Activated CD8-positive, alpha-beta T cell treated with anti-CD3 and anti-CD28 coated beads for 36 hours (primary cell): ENCODE measurements at regions of chr1 and their contacts with region 1.

Region 1: DNA sequence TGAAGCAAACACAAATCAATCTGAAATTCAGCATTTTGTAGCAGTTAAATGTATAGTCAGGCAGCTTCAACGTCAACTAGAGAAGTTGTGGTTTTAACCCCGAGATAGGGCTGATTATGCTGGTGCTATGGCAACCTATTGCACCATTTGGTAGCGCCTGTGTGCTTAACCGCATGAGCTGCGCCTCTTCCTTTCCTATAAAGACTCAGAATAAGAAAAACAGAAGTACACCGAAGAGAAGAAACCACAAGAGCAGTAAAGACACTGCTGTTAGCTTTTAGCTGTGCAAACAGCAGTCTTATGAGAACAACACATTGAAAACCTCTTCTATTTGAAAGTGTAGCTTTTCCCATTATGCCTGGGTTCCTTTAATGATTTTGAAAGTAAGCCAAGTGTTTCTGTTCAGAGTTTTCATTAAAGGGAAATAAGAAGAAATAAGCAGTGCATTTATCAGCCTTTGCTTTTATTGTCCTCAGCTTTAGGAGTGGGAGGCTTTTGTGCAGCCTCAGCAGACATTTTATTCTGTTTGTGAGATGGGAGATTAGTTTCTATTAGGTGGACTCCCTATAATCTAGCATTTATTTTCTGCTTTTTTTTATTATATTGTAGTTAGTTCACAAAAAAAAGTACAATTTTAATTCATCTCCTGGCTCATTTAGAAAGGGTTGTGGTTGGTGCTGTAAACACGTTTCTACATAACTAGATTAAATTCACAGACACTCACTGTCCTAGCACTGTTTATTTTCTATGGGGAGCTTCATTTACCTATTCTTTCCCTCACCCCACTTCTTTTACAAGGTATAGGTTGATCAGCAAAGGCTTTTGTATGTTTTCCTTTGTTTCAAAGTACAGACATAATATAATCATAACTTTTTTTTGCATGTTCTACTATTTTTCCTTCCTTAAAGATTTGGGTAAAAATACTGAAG is 43.3 kb downstream of the PTPRC start:
- DNase-seq: peak; percentile 91
- ATAC-seq: peak; percentile 72
- H3K4me3 Mint-ChIP-seq: peak overlapping the region; percentile 67
- H3K27ac Mint-ChIP-seq: peak overlapping the region; percentile 90
- H3K4me1 Mint-ChIP-seq: peaks cover 85% of the 10 kb centered on the region
- H3K27me3 Mint-ChIP-seq: no peaks in the 10 kb centered on the region
- CTCF ChIP-seq: no peak

Region 2: GRCh38 chr1:198212637-198213036 is 469.5 kb before region 1 on chr1:
- CTCF ChIA-PET with region 1: no interaction called
- POLR2A ChIA-PET with region 1: no interaction called
- intact Hi-C with region 1: no loop called
- DNase-seq: no peak
- ATAC-seq: peak; percentile 45
- H3K4me3 Mint-ChIP-seq: no peak overlapping the region
- H3K27ac Mint-ChIP-seq: no peak overlapping the region
- H3K4me1 Mint-ChIP-seq: peaks cover 24% of the 10 kb centered on the region
- H3K27me3 Mint-ChIP-seq: no peaks in the 10 kb centered on the region
- CTCF ChIP-seq: no peak

Region 3: GRCh38 chr1:198520524-198521254 is 161.4 kb before region 1 on chr1:
- CTCF ChIA-PET with region 1: interaction called, 8 read pairs
- POLR2A ChIA-PET with region 1: interaction called, 4 read pairs
- intact Hi-C with region 1: loop called (anchors 5 kb)
- DNase-seq: peak; percentile 37
- ATAC-seq: peak; percentile 60
- H3K4me3 Mint-ChIP-seq: peak overlapping the region; percentile 72
- H3K27ac Mint-ChIP-seq: peak overlapping the region; percentile 92
- H3K4me1 Mint-ChIP-seq: peaks cover 68% of the 10 kb centered on the region
- H3K27me3 Mint-ChIP-seq: no peaks in the 10 kb centered on the region
- CTCF ChIP-seq: no peak

Region 4: DNA sequence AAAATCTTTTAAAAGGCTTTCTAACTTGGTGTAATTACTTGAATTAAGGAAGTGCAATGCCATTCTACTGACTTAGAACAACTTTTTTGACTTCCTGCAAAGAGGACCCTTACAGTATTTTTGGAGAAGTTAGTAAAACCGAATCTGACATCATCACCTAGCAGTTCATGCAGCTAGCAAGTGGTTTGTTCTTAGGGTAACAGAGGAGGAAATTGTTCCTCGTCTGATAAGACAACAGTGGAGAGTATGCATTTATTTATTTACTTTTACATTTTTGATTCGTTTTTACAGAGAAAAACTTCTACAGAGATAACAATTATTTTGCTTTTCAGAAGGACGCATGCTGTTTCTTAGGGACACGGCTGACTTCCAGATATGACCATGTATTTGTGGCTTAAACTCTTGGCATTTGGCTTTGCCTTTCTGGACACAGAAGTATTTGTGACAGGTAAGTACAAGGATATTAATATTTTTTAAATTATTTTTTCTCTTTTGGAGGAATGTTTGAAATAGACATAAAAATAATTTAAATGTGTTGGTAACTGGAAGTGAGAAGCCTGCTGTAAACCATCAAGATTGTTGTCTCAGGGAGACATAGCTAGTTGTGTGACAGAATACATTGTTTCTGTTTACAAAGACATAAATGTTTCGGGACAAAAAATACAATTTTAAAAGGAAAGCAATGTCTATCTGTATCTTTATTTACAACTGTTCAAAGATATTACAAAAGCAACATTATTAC is 43.0 kb before region 1 on chr1 and contains the start of gene PTPRC:
- CTCF ChIA-PET with region 1: interaction called, 10 read pairs
- POLR2A ChIA-PET with region 1: interaction called, 30 read pairs
- intact Hi-C with region 1: no loop called
- DNase-seq: no peak
- ATAC-seq: peak; percentile 57
- H3K4me3 Mint-ChIP-seq: peak within 1 kb of the TSS; percentile 86
- H3K27ac Mint-ChIP-seq: peak within 1 kb of the TSS; percentile 97
- H3K4me1 Mint-ChIP-seq: peaks cover 39% of the 10 kb centered on the region
- H3K27me3 Mint-ChIP-seq: no peaks in the 10 kb centered on the region
- CTCF ChIP-seq: no peak
- total RNA-seq, gene PTPRC: 475 to 499 TPM

Region 5: DNA sequence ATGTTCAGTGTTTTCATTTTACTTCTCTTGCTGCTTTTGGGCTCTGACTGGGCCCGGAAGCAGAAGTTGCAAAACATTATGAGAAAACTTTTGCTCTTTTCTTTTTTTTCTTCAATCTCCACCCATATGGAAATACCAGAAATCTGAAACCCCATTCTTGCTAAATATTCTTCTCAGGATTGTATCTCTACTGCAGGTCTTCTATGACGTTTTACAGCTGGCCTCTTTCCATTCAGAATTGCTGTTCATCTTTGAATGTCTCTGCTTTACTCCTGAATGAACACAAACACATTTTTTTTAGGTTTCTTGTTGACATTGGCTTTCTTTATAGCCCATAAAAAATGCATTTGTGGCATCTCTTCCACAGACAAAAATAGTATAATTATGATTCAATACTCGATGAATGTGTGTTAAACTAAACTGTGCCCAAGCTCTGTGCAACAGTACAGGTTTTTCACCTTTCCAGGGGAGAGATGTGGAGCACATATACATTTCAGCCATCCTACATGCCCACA is 24.5 kb before region 1 on chr1:
- CTCF ChIA-PET with region 1: interaction called, 3 read pairs
- POLR2A ChIA-PET with region 1: interaction called, 61 read pairs
- intact Hi-C with region 1: no loop called
- DNase-seq: peak; percentile 52
- ATAC-seq: peak; percentile 40
- H3K4me3 Mint-ChIP-seq: peak overlapping the region; percentile 71
- H3K27ac Mint-ChIP-seq: peak overlapping the region; percentile 96
- H3K4me1 Mint-ChIP-seq: peaks cover 64% of the 10 kb centered on the region
- H3K27me3 Mint-ChIP-seq: no peaks in the 10 kb centered on the region
- CTCF ChIP-seq: no peak